ENCODE measurements at regions of chr4 and their contacts with region 1.

Region 1: GRCh38 chr4:106266201-106266600 is 49.8 kb downstream of the TBCK start:
- DNase-seq: peak; percentile 34
- ATAC-seq: no peak
- H3K4me3 ChIP-seq: no peak overlapping the region
- H3K27ac ChIP-seq: no peak overlapping the region
- H3K4me1 ChIP-seq: peaks cover 0 to 5% of the 10 kb centered on the region in 2 experiments; a peak in 2 of 4 replicates
- H3K27me3 ChIP-seq: no peaks in the 10 kb centered on the region
- CTCF ChIP-seq: peak; percentile 45 to 72 (median 48); a peak in 5 of 6 replicates
- POLR2A ChIP-seq: no peak
- RAD21 ChIP-seq: peak; percentile 69

Region 2: DNA sequence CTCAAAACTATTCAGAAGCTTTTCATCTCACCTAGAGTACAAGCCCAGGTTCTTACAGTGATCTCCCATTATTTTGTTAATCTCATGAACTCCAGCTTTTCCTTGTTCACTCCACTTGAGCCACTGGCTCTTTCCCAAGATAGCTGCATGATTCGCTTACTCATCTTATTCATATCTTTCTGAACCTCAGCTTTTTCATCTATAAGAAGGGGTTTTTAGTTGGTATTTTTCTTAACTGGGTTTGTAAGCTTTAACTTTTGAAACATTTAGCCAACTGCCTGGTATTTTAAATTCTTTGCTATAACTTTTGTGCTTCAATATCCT is 78.4 kb after region 1 on chr4:
- CTCF ChIA-PET with region 1: no interaction called
- POLR2A ChIA-PET with region 1: no interaction called
- RAD21 ChIA-PET with region 1: no interaction called
- intact Hi-C with region 1: no loop called
- DNase-seq: no peak
- ATAC-seq: no peak
- H3K4me3 ChIP-seq: no peak overlapping the region
- H3K27ac ChIP-seq: no peak overlapping the region
- H3K4me1 ChIP-seq: no peaks in the 10 kb centered on the region
- H3K27me3 ChIP-seq: no peaks in the 10 kb centered on the region
- CTCF ChIP-seq: no peak
- POLR2A ChIP-seq: no peak
- RAD21 ChIP-seq: no peak

Region 3: GRCh38 chr4:106502106-106502699 is 236.0 kb after region 1 on chr4:
- CTCF ChIA-PET with region 1: interaction called, 7 read pairs
- POLR2A ChIA-PET with region 1: no interaction called
- RAD21 ChIA-PET with region 1: no interaction called
- intact Hi-C with region 1: loop called (anchors 1 kb)
- DNase-seq: peak; percentile 54
- ATAC-seq: peak; percentile 97
- H3K4me3 ChIP-seq: peak overlapping the region in 1 of 2 experiments; percentile 17; a peak in 1 of 4 replicates
- H3K27ac ChIP-seq: no peak overlapping the region
- H3K4me1 ChIP-seq: peaks cover 0 to 2% of the 10 kb centered on the region in 2 experiments; a peak in 1 of 4 replicates
- H3K27me3 ChIP-seq: no peaks in the 10 kb centered on the region
- CTCF ChIP-seq: peak; percentile 74 to 83 (median 81)
- POLR2A ChIP-seq: no peak
- RAD21 ChIP-seq: peak; percentile 83

Region 4: DNA sequence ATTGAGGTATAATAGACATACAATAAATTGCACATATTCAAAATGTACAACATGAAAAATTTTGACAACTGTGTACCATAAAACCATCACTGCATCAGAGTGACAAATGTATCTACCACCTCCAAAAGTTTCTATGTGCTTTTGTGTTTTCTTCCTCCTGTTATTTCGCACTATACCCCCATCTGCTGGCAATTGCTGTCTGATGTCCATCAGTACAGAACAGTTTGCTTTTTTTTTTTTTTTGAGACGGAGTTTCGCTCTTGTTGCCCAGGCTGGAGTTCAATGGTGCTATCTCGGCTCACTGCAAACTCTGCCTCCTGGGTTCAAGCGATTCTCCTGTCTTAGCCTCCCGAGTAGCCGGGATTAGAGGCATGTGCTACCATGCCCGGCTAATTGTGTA is 256.6 kb after region 1 on chr4:
- CTCF ChIA-PET with region 1: interaction called, 11 read pairs
- POLR2A ChIA-PET with region 1: no interaction called
- RAD21 ChIA-PET with region 1: no interaction called
- intact Hi-C with region 1: no loop called
- DNase-seq: no peak
- ATAC-seq: peak; percentile 55; the same call in 1 of the 2 replicates
- H3K4me3 ChIP-seq: no peak overlapping the region
- H3K27ac ChIP-seq: no peak overlapping the region
- H3K4me1 ChIP-seq: no peaks in the 10 kb centered on the region
- H3K27me3 ChIP-seq: no peaks in the 10 kb centered on the region
- CTCF ChIP-seq: peak in 2 of 3 experiments; percentile 12 to 31; a peak in 3 of 6 replicates
- POLR2A ChIP-seq: no peak
- RAD21 ChIP-seq: peak; percentile 34; the same call in 1 of the 2 replicates

Region 5: DNA sequence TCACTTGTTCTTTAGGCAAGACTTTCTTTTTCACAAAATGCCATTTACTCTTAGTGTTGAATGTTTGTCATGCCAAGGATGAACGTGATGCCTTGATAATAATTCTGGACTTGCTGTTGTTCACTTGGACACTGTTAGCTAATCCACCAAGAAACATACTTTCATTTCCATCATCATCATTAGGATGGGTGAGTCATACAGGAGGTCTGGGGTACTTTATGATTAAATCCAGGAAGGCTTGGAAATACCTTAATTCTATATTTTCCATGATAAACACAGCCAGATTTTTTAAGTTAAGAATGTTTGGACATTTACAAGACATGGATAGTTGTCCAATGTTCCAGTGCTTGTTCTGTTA is 363.0 kb after region 1 on chr4:
- CTCF ChIA-PET with region 1: no interaction called
- POLR2A ChIA-PET with region 1: no interaction called
- RAD21 ChIA-PET with region 1: no interaction called
- intact Hi-C with region 1: no loop called
- DNase-seq: no peak
- ATAC-seq: no peak
- H3K4me3 ChIP-seq: no peak overlapping the region
- H3K27ac ChIP-seq: no peak overlapping the region
- H3K4me1 ChIP-seq: no peaks in the 10 kb centered on the region
- H3K27me3 ChIP-seq: no peaks in the 10 kb centered on the region
- CTCF ChIP-seq: no peak
- POLR2A ChIP-seq: no peak
- RAD21 ChIP-seq: no peak

Region 6: DNA sequence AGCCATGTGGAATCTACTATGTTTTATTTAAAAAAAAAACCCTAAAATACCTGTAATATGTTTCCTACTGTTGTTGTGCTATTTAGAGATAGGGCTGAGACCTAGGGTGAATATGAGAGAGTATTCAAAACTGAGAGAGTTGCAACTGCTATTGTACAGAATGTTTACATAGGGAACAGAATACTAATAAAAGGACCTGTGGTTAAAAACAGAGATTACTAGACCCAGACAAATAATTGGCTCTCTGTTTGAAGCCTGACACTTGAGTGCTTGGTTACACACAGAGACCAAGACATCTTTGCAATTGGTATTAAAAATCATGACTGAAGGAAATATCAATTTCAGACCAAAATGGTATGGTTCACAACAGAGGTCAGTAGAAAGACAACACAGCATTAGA is 381.2 kb after region 1 on chr4:
- CTCF ChIA-PET with region 1: no interaction called
- POLR2A ChIA-PET with region 1: no interaction called
- RAD21 ChIA-PET with region 1: no interaction called
- intact Hi-C with region 1: no loop called
- DNase-seq: no peak
- ATAC-seq: no peak
- H3K4me3 ChIP-seq: no peak overlapping the region
- H3K27ac ChIP-seq: no peak overlapping the region
- H3K4me1 ChIP-seq: no peaks in the 10 kb centered on the region
- H3K27me3 ChIP-seq: no peaks in the 10 kb centered on the region
- CTCF ChIP-seq: no peak
- POLR2A ChIP-seq: no peak
- RAD21 ChIP-seq: no peak

Region 7: GRCh38 chr4:106809076-106809475 is 542.9 kb after region 1 on chr4:
- CTCF ChIA-PET with region 1: interaction called, 6 read pairs
- POLR2A ChIA-PET with region 1: no interaction called
- RAD21 ChIA-PET with region 1: no interaction called
- intact Hi-C with region 1: loop called (anchors 5 kb)
- DNase-seq: peak; percentile 26
- ATAC-seq: peak; percentile 81
- H3K4me3 ChIP-seq: no peak overlapping the region
- H3K27ac ChIP-seq: no peak overlapping the region
- H3K4me1 ChIP-seq: no peaks in the 10 kb centered on the region
- H3K27me3 ChIP-seq: no peaks in the 10 kb centered on the region
- CTCF ChIP-seq: peak; percentile 18 to 41 (median 36); a peak in 3 of 6 replicates
- POLR2A ChIP-seq: no peak
- RAD21 ChIP-seq: peak; percentile 75

Region 8: DNA sequence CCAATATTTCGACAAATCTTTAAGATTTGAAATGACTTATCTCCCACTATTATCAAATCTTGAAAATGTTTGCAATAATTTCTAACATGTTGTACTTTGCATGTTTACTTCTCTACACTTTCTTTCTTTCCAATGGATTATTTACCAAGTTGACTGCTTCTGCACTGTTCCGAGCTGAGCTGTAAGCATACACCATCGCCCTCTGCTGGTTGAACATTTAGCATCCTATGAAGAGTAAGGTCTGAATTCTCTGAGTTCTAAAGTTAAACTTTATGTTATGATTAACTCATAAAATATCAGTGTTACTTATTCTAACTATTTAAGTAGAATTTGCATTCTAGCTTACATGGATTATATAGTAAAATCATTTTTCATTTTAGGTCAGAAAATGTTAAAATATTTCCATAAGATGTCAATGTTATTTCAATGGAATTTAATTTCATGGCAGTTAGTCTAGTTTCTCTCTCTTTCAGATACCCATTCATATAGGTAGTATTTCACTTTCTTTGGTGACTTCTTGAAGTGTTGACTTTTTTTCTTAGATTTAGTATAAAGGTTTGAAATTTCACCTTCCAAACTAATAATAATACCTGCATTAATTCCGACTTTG is 632.5 kb after region 1 on chr4:
- CTCF ChIA-PET with region 1: interaction called, 10 read pairs
- POLR2A ChIA-PET with region 1: no interaction called
- RAD21 ChIA-PET with region 1: no interaction called
- intact Hi-C with region 1: loop called (anchors 1 kb)
- DNase-seq: peak; percentile 51
- ATAC-seq: peak; percentile 93
- H3K4me3 ChIP-seq: no peak overlapping the region
- H3K27ac ChIP-seq: no peak overlapping the region
- H3K4me1 ChIP-seq: no peaks in the 10 kb centered on the region
- H3K27me3 ChIP-seq: no peaks in the 10 kb centered on the region
- CTCF ChIP-seq: peak; percentile 51 to 89 (median 74)
- POLR2A ChIP-seq: no peak
- RAD21 ChIP-seq: peak; percentile 72

Region 9: DNA sequence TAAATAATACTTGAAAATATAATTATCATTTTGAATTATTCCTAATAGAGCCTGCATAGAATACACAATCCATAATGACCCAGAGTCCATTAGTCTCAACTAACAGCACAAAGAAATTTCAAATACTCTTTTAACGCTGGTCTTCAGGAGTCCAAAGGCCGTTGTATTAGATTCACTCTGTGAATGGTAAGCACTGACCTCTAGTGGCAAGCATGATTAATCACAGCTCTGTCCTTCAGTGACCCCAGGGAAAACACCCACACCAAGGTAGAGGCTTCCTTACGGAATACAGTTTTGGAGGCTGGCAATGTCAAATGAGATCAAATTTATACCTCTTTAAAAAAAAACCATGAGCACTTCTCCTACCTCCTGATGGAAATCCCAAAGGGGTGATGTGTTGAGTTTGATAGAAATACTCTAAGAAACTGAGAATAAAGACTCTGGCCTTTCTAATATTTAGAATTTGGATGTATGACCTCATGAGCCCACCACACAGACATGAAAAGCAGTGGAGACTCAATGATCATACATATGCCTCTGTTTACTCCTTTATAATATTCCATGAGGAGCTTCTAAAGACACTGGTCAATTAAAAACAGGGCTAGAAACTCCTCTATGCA is 917.1 kb after region 1 on chr4:
- CTCF ChIA-PET with region 1: interaction called, 4 read pairs
- POLR2A ChIA-PET with region 1: no interaction called
- RAD21 ChIA-PET with region 1: no interaction called
- intact Hi-C with region 1: loop called (anchors 5 kb)
- DNase-seq: peak; percentile 55
- ATAC-seq: peak; percentile 100
- H3K4me3 ChIP-seq: no peak overlapping the region
- H3K27ac ChIP-seq: no peak overlapping the region
- H3K4me1 ChIP-seq: 0 out of 4 replicates have a peak, but pooled peaks cover 0 to 2% of the 10 kb centered on the region in 2 experiments
- H3K27me3 ChIP-seq: no peaks in the 10 kb centered on the region
- CTCF ChIP-seq: peak; percentile 66 to 78 (median 75); a peak in 5 of 6 replicates
- POLR2A ChIP-seq: no peak
- RAD21 ChIP-seq: peak; percentile 77

Region 10: DNA sequence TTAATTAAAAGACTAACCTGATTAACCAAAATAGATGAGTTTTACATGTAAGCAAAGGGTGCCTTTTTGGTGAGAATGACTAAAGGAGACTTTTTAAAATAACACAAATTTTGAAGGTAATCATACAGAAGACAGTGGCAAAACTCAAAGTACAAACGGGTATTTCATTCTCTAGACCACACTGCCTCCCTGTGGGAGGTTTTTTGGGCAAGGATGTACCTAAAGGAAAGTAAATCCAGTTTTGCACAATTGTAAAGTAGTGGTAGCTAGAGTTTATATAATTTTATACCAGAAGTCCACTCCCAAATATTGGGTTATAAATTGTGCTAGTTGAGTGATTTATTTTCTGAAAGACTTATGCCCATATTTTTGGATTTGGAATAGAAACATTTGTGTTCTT is 1252.9 kb after region 1 on chr4:
- CTCF ChIA-PET with region 1: no interaction called
- POLR2A ChIA-PET with region 1: no interaction called
- RAD21 ChIA-PET with region 1: no interaction called
- intact Hi-C with region 1: loop called (anchors 5 kb)
- DNase-seq: peak; percentile 19
- ATAC-seq: peak; percentile 62
- H3K4me3 ChIP-seq: no peak overlapping the region
- H3K27ac ChIP-seq: no peak overlapping the region
- H3K4me1 ChIP-seq: no peaks in the 10 kb centered on the region
- H3K27me3 ChIP-seq: no peaks in the 10 kb centered on the region
- CTCF ChIP-seq: peak; percentile 42 to 67 (median 49); a peak in 4 of 6 replicates
- POLR2A ChIP-seq: no peak
- RAD21 ChIP-seq: peak; percentile 72